CD4-positive, alpha-beta memory T cell (primary cell): ENCODE measurements at regions of chr3 and their contacts with region 1.

Region 1: GRCh38 chr3:184561061-184561912 is at the start of gene EPHB3:
- DNase-seq: peak; percentile 87 to 90 (median 89)
- H3K4me3 ChIP-seq: peak within 1 kb of the TSS; percentile 9 to 68
- H3K4me3 Mint-ChIP-seq: peak within 1 kb of the TSS; percentile 77 to 91 (median 84)
- H3K27ac ChIP-seq: no peak within 1 kb of the TSS
- H3K27ac Mint-ChIP-seq: peak within 1 kb of the TSS; percentile 45 to 86 (median 75)
- H3K4me1 ChIP-seq: peaks cover 38% of the 10 kb centered on the region
- H3K4me1 Mint-ChIP-seq: peaks cover 24 to 61% (median 38%) of the 10 kb centered on the region in 4 donors
- H3K27me3 ChIP-seq: peaks cover 9% of the 10 kb centered on the region
- H3K27me3 Mint-ChIP-seq: peaks cover 12 to 17% of the 10 kb centered on the region in 2 donors
- total RNA-seq, gene EPHB3: 0.29 to 0.67 TPM

Region 2: DNA sequence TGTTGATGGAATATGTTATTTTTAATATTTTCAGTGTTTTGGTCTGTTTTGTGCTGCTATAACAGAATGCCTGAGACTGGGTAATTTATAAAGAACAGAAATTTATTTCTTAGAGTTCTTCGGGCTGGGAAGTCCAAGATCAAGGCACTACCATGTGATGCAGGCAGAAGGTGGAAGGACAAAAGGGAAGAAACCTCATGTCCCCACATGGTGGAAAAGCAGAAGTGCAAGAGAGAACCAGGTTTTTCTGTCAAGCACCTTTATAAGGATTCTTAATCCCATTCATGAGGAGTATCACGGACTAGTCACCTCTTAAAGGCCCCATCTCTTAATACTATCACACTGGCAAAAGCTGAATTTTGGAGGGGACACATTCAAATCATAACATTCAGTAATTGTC is 57.6 kb before region 1 on chr3:
- CTCF ChIA-PET with region 1: no interaction called
- POLR2A ChIA-PET with region 1: no interaction called
- intact Hi-C with region 1: no loop called
- DNase-seq: no peak
- H3K4me3 ChIP-seq: no peak overlapping the region
- H3K4me3 Mint-ChIP-seq: no peak overlapping the region
- H3K27ac ChIP-seq: no peak overlapping the region
- H3K27ac Mint-ChIP-seq: no peak overlapping the region
- H3K4me1 ChIP-seq: no peaks in the 10 kb centered on the region
- H3K4me1 Mint-ChIP-seq: no peaks in the 10 kb centered on the region
- H3K27me3 ChIP-seq: peaks cover 4% of the 10 kb centered on the region
- H3K27me3 Mint-ChIP-seq: peaks cover 23 to 32% of the 10 kb centered on the region in 2 donors

Region 3: GRCh38 chr3:184549793-184550577 is 11.3 kb before region 1 on chr3:
- CTCF ChIA-PET with region 1: interaction called, 25 read pairs
- POLR2A ChIA-PET with region 1: interaction called, 3 read pairs
- intact Hi-C with region 1: no loop called
- DNase-seq: no peak
- H3K4me3 ChIP-seq: no peak overlapping the region
- H3K4me3 Mint-ChIP-seq: no peak overlapping the region
- H3K27ac ChIP-seq: no peak overlapping the region
- H3K27ac Mint-ChIP-seq: peak overlapping the region in 2 of 7 donors; percentile 36 to 41
- H3K4me1 ChIP-seq: peaks cover 10% of the 10 kb centered on the region
- H3K4me1 Mint-ChIP-seq: peaks cover 3 to 26% (median 7%) of the 10 kb centered on the region in 4 donors
- H3K27me3 ChIP-seq: no peaks in the 10 kb centered on the region
- H3K27me3 Mint-ChIP-seq: peaks cover 2 to 4% of the 10 kb centered on the region in 2 donors

Region 4: DNA sequence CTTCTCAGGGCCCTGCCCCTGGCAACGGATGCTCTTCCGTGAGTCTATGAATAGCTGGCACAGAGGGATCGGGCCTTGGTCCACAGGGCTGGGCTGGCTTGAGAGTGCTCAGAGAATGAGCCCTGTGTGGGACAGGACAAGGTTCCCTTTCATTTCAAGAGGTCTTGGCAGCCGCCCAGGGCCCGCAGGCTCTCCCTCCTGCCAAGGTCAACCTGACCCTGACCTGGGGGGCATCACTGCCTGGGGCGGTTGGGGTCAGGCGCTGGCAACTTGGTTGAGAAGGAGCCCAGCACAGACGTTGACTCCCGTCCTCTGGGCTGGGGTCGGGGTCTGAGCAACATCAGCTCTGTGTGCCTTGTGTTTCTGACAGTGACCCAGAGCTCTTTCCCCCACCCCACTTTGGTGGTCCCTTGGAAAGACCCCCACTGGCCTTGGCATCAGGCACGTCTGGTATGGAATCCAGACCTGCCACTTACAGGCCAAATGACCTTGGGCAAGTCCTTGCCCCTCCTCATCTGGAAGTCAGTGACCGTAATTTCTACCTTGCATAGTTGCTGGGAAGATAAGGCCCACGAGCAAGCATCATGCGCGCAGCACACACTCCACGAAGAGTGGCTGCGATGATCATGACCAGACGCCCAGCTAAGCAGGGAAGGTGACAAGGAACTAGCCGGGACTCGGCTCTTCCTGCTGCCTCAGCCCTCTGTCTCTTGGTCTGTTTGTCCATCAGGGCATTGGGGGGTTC is 36.7 kb after region 1 on chr3:
- CTCF ChIA-PET with region 1: no interaction called
- POLR2A ChIA-PET with region 1: no interaction called
- intact Hi-C with region 1: no loop called
- DNase-seq: no peak
- H3K4me3 ChIP-seq: no peak overlapping the region
- H3K4me3 Mint-ChIP-seq: no peak overlapping the region
- H3K27ac ChIP-seq: no peak overlapping the region
- H3K27ac Mint-ChIP-seq: peak overlapping the region in 1 of 7 donors; percentile 10
- H3K4me1 ChIP-seq: peaks cover 6% of the 10 kb centered on the region
- H3K4me1 Mint-ChIP-seq: peaks cover 4 to 15% (median 10%) of the 10 kb centered on the region in 4 donors
- H3K27me3 ChIP-seq: peaks cover 8% of the 10 kb centered on the region
- H3K27me3 Mint-ChIP-seq: peaks cover 15 to 24% of the 10 kb centered on the region in 2 donors

Region 5: GRCh38 chr3:184711493-184712247 is 150.4 kb after region 1 on chr3 and contains the start of gene MAGEF1:
- CTCF ChIA-PET with region 1: interaction called, 6 read pairs
- POLR2A ChIA-PET with region 1: interaction called, 13 read pairs
- intact Hi-C with region 1: no loop called
- DNase-seq: peak; percentile 65 to 80 (median 71)
- H3K4me3 ChIP-seq: peak within 1 kb of the TSS; percentile 43 to 69
- H3K4me3 Mint-ChIP-seq: peak within 1 kb of the TSS; percentile 86 to 97 (median 94)
- H3K27ac ChIP-seq: peak within 1 kb of the TSS; percentile 63
- H3K27ac Mint-ChIP-seq: peak within 1 kb of the TSS; percentile 69 to 97 (median 95)
- H3K4me1 ChIP-seq: peaks cover 21% of the 10 kb centered on the region
- H3K4me1 Mint-ChIP-seq: peaks cover 26 to 33% (median 30%) of the 10 kb centered on the region in 4 donors
- H3K27me3 ChIP-seq: no peaks in the 10 kb centered on the region
- H3K27me3 Mint-ChIP-seq: no peaks in the 10 kb centered on the region
- total RNA-seq, gene MAGEF1: 16.4 to 16.5 TPM

Region 6: DNA sequence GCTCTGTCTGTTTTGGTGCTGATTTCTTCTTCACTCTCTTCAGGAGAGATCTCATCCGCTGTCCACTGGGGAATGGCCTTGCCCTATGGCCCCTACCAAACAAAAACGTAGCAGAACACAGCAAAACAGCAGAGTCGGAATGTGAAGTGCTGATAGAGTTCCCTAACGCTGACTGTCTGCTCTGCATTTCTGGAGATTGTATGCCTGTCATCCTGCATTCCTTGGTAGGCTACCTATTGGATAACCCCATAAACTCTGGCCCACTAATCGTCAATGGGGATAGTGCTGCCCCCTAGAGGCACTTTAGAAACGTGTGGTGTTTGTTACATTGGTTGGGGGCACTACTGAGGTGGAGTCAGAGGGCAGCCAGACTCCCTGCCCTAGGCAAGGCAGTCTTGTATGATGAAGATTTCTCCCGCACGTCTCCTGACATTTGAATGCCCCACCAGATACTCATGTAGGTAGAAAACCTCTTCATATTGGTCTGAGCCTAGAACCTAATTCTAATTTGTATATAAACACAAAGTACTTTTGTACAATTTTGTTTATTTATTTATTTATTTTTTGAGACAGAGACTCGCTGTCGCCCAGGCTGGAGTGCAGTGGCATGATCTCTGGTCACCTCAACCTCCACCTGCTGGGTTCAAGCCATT is 166.2 kb after region 1 on chr3:
- CTCF ChIA-PET with region 1: interaction called, 5 read pairs
- POLR2A ChIA-PET with region 1: interaction called, 4 read pairs
- intact Hi-C with region 1: loop called (anchors 1 kb)
- DNase-seq: peak; percentile 31 to 45 (median 39)
- H3K4me3 ChIP-seq: no peak overlapping the region
- H3K4me3 Mint-ChIP-seq: no peak overlapping the region
- H3K27ac ChIP-seq: no peak overlapping the region
- H3K27ac Mint-ChIP-seq: no peak overlapping the region
- H3K4me1 ChIP-seq: no peaks in the 10 kb centered on the region
- H3K4me1 Mint-ChIP-seq: no peaks in the 10 kb centered on the region
- H3K27me3 ChIP-seq: no peaks in the 10 kb centered on the region
- H3K27me3 Mint-ChIP-seq: peaks cover 5 to 10% of the 10 kb centered on the region in 2 donors

Region 7: GRCh38 chr3:184777336-184778004 is 216.2 kb after region 1 on chr3:
- CTCF ChIA-PET with region 1: no interaction called
- POLR2A ChIA-PET with region 1: interaction called, 14 read pairs
- intact Hi-C with region 1: loop called (anchors 1 kb)
- DNase-seq: peak; percentile 75 to 86 (median 76)
- H3K4me3 ChIP-seq: no peak overlapping the region
- H3K4me3 Mint-ChIP-seq: no peak overlapping the region
- H3K27ac ChIP-seq: no peak overlapping the region
- H3K27ac Mint-ChIP-seq: no peak overlapping the region
- H3K4me1 ChIP-seq: no peaks in the 10 kb centered on the region
- H3K4me1 Mint-ChIP-seq: peaks cover 0 to 4% (median under 1%) of the 10 kb centered on the region in 4 donors
- H3K27me3 ChIP-seq: no peaks in the 10 kb centered on the region
- H3K27me3 Mint-ChIP-seq: peaks cover 14 to 30% of the 10 kb centered on the region in 2 donors

Region 8: GRCh38 chr3:184805351-184806038 is 244.2 kb after region 1 on chr3:
- CTCF ChIA-PET with region 1: interaction called, 10 read pairs
- POLR2A ChIA-PET with region 1: interaction called, 3 read pairs
- intact Hi-C with region 1: loop called (anchors 1 kb)
- DNase-seq: no peak
- H3K4me3 ChIP-seq: no peak overlapping the region
- H3K4me3 Mint-ChIP-seq: no peak overlapping the region
- H3K27ac ChIP-seq: no peak overlapping the region
- H3K27ac Mint-ChIP-seq: no peak overlapping the region
- H3K4me1 ChIP-seq: no peaks in the 10 kb centered on the region
- H3K4me1 Mint-ChIP-seq: no peaks in the 10 kb centered on the region
- H3K27me3 ChIP-seq: no peaks in the 10 kb centered on the region
- H3K27me3 Mint-ChIP-seq: peaks cover 10 to 16% of the 10 kb centered on the region in 2 donors